Spleen (tissue), 13 donors: ENCODE measurements at regions of chrX and their contacts with region 1.

Region 1: DNA sequence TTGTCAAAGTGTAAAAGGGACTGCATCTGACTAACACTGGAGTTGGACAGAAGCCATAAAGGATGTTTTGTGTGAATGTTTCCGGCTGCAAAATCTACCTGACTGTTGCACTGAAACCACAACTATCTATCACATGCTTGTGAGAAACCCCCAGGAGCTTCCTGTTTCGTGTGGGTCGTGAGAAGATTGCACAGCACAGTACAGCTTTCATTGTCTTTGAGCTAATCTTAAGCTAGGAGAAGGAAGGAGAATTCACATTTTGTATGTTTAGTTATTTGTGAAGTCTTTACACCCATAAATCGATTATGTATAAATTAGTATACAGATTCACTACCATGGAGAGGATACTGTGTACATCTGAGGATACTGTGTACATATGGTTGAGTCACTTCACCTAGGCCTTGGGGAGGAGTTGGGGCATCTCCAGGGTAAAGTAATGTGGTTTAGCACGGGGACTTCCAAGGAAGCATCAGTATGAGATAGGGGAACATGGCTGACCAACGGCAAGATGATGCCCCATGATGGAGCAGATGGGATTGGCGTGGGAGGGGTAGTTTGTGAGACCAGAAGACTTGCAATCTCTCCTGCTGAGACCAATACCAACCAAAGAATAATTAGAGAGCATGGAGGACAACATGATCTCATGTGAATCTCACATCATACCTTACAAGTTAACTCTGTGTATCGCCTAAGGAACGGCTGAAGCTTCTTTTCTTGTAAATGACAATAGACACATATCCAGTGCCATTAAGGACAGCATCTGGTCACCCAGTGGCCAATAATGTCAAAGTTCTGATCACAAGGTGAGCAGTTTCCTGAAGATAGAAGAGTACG is 43.1 kb upstream of the FAM9C start:
- DNase-seq: no peak
- H3K4me3 ChIP-seq: peak overlapping the region in 1 of 8 donors; percentile 55
- H3K27ac ChIP-seq: peak overlapping the region; percentile 62 to 90 (median 88)
- H3K4me1 ChIP-seq: peaks cover 32 to 100% (median 87%) of the 10 kb centered on the region in 6 donors
- H3K27me3 ChIP-seq: peaks cover 0 to 5% (median 0%) of the 10 kb centered on the region in 7 donors
- CTCF ChIP-seq: no peak
- POLR2A ChIP-seq: no peak

Region 2: GRCh38 chrX:12984629-12985319 is 102.8 kb before region 1 on chrX:
- intact Hi-C with region 1: loop called (anchors 10 kb)
- DNase-seq: no peak
- H3K4me3 ChIP-seq: no peak overlapping the region
- H3K27ac ChIP-seq: peak overlapping the region in 5 of 8 donors; percentile 11 to 63 (median 38)
- H3K4me1 ChIP-seq: peaks cover 7 to 74% (median 42%) of the 10 kb centered on the region in 6 donors
- H3K27me3 ChIP-seq: no peaks in the 10 kb centered on the region
- CTCF ChIP-seq: no peak
- POLR2A ChIP-seq: no peak